Ascending aorta (tissue), 2 donors: ENCODE measurements at regions of chr15 and their contacts with region 1.

Region 1: GRCh38 chr15:74615508-74616365 is at the start of gene CLK3:
- DNase-seq: peak; percentile 76 to 98
- H3K4me3 ChIP-seq: peak within 1 kb of the TSS; percentile 76 to 86
- H3K27ac ChIP-seq: peak within 1 kb of the TSS; percentile 98 to 99
- H3K4me1 ChIP-seq: peaks cover 19 to 22% of the 10 kb centered on the region in 2 donors
- H3K27me3 ChIP-seq: no peaks in the 10 kb centered on the region
- CTCF ChIP-seq: no peak
- total RNA-seq, gene CLK3: 154 TPM

Region 2: GRCh38 chr15:74460871-74461846 is 154.6 kb before region 1 on chr15 and contains the start of gene UBL7:
- intact Hi-C with region 1: loop called (anchors 1 kb)
- DNase-seq: peak; percentile 95 to 99
- H3K4me3 ChIP-seq: peak within 1 kb of the TSS; percentile 65 to 70
- H3K27ac ChIP-seq: peak within 1 kb of the TSS; percentile 68 to 79
- H3K4me1 ChIP-seq: peaks cover 6 to 9% of the 10 kb centered on the region in 2 donors
- H3K27me3 ChIP-seq: no peaks in the 10 kb centered on the region
- CTCF ChIP-seq: peak in 1 of 3 experiments; percentile 21
- total RNA-seq, gene UBL7: 63.4 TPM

Region 3: DNA sequence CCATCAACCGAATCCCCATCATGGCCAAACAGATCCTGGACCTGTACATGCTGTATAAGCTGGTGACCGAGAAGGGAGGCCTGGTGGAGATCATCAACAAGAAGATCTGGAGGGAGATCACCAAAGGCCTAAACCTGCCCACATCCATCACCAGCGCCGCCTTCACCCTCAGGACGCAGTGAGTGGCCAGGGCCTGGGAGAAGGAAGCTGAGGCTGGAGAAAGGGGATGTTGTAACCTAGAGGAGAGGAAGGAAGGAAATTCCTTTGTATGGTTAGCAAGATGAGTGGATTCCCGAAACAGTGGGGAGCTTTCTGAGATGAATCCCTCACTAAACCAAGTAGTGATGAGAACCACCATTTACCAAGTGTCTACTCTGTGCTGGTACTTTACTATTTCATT is 25.9 kb before region 1 on chr15:
- intact Hi-C with region 1: loop called (anchors 2 kb)
- DNase-seq: no peak
- H3K4me3 ChIP-seq: no peak overlapping the region
- H3K27ac ChIP-seq: peak overlapping the region; percentile 23 to 54
- H3K4me1 ChIP-seq: peaks cover 0 to 8% of the 10 kb centered on the region in 2 donors
- H3K27me3 ChIP-seq: no peaks in the 10 kb centered on the region
- CTCF ChIP-seq: no peak

Region 4: DNA sequence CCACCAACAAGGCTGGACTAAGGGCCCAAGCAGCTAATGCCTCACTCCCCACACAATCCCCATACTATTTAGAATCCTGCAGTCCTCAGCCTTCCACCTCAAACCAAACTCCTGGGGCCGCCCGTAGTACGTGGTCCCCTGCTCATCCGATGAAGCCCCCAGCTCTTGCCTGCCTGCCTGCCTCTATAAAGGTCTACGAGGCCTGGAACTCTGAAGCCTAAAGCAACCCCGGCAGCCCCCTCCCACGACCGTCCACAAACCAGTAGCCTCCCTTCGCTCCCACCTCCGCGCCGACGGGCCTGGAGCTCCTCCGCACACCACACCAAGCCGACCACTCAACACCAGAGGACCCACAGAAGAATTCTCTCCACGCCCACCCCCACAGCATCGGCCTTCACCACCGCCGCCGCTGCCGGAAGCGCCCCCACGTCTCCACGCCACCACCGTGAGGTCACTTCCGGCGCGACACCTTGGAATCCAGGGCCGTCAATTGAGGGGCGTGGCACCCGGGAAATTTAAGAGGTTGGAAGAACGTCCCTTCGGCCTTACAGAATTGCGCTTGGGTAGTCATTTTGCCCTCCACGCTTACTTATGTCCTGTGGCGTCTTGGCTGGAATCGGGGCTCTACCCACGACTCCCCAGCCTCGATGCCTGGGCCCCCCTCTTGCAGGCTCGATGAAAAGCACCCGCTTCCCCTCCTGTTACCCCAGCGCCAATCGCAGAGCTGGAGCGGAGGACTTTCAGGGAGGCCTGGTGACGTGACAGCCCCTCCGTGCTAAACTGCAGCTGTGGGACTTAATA is 80.1 kb after region 1 on chr15 and contains the start of gene EDC3:
- intact Hi-C with region 1: loop called (anchors 5 kb)
- DNase-seq: peak; percentile 35 to 92
- H3K4me3 ChIP-seq: peak within 1 kb of the TSS; percentile 85 to 90
- H3K27ac ChIP-seq: peak within 1 kb of the TSS; percentile 88 to 91
- H3K4me1 ChIP-seq: peaks cover 7 to 15% of the 10 kb centered on the region in 2 donors
- H3K27me3 ChIP-seq: no peaks in the 10 kb centered on the region
- CTCF ChIP-seq: no peak
- total RNA-seq, gene EDC3: 8.8 TPM